B cell (primary cell): ENCODE measurements at regions of chr3 and their contacts with region 1.

Region 1: DNA sequence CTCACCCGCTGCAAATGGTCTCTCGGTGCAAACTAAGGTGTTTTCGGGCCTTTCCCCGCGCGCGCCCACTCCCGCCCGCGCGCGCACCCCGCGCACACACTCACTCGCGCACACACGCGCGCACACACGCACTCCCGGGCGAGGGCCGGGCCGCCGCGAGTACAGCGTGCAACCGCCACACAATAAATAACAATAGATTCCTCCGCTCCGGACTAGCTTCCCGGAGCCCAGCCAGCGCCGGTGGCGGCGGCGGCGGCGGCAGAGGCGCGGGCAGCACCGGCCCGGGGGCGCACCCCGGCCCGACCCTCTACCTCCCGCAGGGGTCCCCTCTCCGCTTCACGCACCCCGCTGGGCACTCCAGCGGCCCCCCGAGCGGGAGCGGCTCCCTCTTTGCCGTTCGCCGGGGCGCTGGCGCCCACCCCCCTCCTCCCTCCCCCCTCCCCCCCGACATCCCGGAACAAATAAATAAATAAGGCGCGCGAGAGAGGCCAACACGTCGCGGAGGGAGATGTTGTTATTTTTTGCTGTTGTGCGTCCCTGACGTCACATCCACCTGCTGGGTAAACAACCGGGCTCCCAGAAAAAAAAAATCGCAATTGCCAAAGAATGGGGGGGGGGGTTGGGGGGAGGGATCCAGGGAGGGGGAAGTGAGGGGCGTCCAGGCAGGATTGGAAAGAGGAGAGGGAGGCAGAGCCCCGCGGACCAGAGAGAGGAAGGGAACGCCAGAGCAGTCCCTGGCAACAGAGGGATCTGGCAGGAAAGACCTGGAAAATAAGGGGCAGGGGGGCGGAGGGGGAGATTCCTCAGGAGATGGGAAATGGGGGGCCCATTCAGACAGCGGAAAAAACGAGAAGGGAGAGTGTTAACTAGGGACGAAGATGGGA is at the start of gene FOXP1:
- DNase-seq: peak; percentile 90
- ATAC-seq: peak; percentile 26
- H3K4me3 ChIP-seq: peak within 1 kb of the TSS; percentile 80 to 97 (median 92)
- H3K4me3 Mint-ChIP-seq: peak within 1 kb of the TSS; percentile 96
- H3K27ac ChIP-seq: peak within 1 kb of the TSS; percentile 90 to 97
- H3K27ac Mint-ChIP-seq: peak within 1 kb of the TSS; percentile 97
- H3K4me1 ChIP-seq: peaks cover 19 to 42% of the 10 kb centered on the region in 2 donors
- H3K4me1 Mint-ChIP-seq: peaks cover 44% of the 10 kb centered on the region
- H3K27me3 ChIP-seq: peaks cover 0 to 9% (median 4%) of the 10 kb centered on the region in 4 experiments
- H3K27me3 Mint-ChIP-seq: peaks cover 3% of the 10 kb centered on the region
- CTCF ChIP-seq: no peak
- total RNA-seq, gene FOXP1: 508 and 530 TPM in 2 replicates

Region 2: DNA sequence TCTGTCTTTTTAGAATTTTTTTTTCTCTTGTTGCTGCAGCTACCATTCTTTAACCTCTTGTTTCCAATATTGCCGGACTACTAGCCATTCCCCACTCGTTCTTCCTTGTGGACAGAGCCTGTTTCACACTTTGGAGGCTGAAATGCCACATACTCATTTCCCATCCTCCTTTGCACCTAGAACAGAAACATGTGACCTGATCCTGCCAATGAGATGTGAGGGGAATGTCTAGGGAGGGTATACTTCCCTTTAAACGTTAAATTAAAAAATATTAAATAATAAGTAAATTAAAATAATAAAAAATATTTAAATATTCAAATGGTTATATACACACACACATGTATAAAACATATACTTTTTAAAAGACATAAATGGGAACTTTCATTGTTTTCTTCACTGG is 1250.7 kb before region 1 on chr3:
- CTCF ChIA-PET with region 1: no interaction called
- POLR2A ChIA-PET with region 1: no interaction called
- intact Hi-C with region 1: no loop called
- DNase-seq: no peak
- ATAC-seq: no peak
- H3K4me3 ChIP-seq: no peak overlapping the region
- H3K4me3 Mint-ChIP-seq: no peak overlapping the region
- H3K27ac ChIP-seq: no peak overlapping the region
- H3K27ac Mint-ChIP-seq: no peak overlapping the region
- H3K4me1 ChIP-seq: no peaks in the 10 kb centered on the region
- H3K4me1 Mint-ChIP-seq: no peaks in the 10 kb centered on the region
- H3K27me3 ChIP-seq: peaks cover 0 to 6% (median 0%) of the 10 kb centered on the region in 4 experiments
- H3K27me3 Mint-ChIP-seq: peaks cover 6% of the 10 kb centered on the region
- CTCF ChIP-seq: no peak

Region 3: DNA sequence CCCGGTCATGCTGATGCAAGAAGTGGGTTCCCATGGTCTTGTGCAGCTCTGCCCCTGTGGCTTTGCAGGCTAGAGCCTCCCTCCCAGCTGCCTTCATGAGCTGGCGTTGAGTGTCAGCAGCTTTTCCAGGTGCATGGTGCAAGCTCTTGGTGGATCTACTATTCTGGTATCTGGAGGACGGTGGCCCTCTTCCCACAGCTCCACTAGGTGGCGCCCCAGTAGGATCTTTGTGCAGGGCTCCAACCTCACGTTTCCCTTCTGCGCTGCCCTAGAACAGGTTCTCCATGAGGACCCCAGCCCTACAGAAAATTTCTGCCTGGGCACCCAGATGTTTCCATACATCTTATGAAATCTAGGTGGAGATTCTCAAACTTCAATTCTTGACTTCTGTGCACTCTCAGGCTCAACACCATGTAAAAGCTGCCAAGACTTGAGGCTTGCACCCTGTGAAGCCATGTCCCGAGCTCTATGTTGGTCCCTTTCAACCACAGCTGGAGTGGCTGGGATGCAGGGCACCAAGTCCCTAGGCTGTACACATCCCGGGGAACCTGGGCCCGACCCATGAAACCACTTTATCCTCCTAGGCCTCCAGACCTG is 1033.0 kb before region 1 on chr3:
- CTCF ChIA-PET with region 1: interaction called, 24 read pairs
- POLR2A ChIA-PET with region 1: no interaction called
- intact Hi-C with region 1: no loop called
- DNase-seq: peak; percentile 72
- ATAC-seq: peak; percentile 45
- H3K4me3 ChIP-seq: no peak overlapping the region
- H3K4me3 Mint-ChIP-seq: no peak overlapping the region
- H3K27ac ChIP-seq: no peak overlapping the region
- H3K27ac Mint-ChIP-seq: no peak overlapping the region
- H3K4me1 ChIP-seq: no peaks in the 10 kb centered on the region
- H3K4me1 Mint-ChIP-seq: no peaks in the 10 kb centered on the region
- H3K27me3 ChIP-seq: no peaks in the 10 kb centered on the region
- H3K27me3 Mint-ChIP-seq: no peaks in the 10 kb centered on the region
- CTCF ChIP-seq: peak; percentile 76

Region 4: GRCh38 chr3:71064288-71064955 is 519.4 kb before region 1 on chr3:
- CTCF ChIA-PET with region 1: interaction called, 7 read pairs
- POLR2A ChIA-PET with region 1: interaction called, 19 read pairs
- intact Hi-C with region 1: loop called (anchors 2 kb)
- DNase-seq: peak; percentile 88
- ATAC-seq: peak; percentile 45
- H3K4me3 ChIP-seq: peak overlapping the region; percentile 62 to 94 (median 76)
- H3K4me3 Mint-ChIP-seq: no peak overlapping the region
- H3K27ac ChIP-seq: peak overlapping the region; percentile 83 to 91
- H3K27ac Mint-ChIP-seq: no peak overlapping the region
- H3K4me1 ChIP-seq: peaks cover 56 to 76% of the 10 kb centered on the region in 2 donors
- H3K4me1 Mint-ChIP-seq: peaks cover 65% of the 10 kb centered on the region
- H3K27me3 ChIP-seq: no peaks in the 10 kb centered on the region
- H3K27me3 Mint-ChIP-seq: no peaks in the 10 kb centered on the region
- CTCF ChIP-seq: no peak

Region 5: DNA sequence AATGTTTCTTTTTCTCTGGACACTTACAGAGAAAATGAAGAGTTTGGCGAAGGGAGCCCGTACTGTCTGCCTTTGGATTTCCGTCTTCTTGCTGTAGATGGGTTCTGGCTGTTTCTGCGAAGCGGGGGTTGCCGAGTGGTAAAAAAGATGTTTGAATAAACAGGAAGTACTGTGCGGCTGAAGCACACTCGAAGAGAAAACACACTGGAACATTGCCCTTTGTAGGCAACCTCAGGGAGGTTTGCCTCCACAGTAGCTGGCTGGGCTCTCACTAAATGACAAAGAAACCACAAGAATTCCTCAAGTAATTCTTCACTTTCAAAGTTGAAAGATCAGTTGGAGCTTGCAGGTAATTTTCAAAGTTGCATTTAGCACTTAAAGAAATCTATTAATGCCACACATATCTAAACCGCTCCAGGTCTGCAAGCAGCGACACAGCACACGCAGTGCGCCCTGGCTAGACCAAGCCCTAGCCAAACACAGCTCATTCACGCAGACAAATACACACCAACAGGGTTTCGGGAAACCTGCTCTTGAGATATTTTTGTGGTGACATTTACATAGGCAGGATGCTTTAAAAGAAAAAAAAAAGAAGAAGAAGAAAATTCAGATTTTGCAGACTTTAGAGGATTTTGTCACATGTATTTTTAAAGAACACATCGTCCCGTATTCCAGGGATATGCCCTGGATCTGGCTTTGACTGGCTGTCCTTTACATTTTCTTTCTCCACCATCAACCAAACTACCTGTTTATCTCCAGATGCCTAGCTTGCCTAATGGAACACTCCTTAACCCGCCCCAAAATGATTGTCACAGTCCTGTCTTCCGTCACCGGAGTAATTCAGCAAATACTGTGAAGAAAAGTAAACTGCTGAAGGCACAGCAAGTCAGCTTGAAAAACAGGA is 453.1 kb before region 1 on chr3:
- CTCF ChIA-PET with region 1: interaction called, 3 read pairs
- POLR2A ChIA-PET with region 1: interaction called, 4 read pairs
- intact Hi-C with region 1: loop called (anchors 1 kb)
- DNase-seq: peak; percentile 81
- ATAC-seq: peak; percentile 76
- H3K4me3 ChIP-seq: peak overlapping the region; percentile 53 to 91 (median 71)
- H3K4me3 Mint-ChIP-seq: peak overlapping the region; percentile 93
- H3K27ac ChIP-seq: peak overlapping the region; percentile 72 to 91
- H3K27ac Mint-ChIP-seq: peak overlapping the region; percentile 94
- H3K4me1 ChIP-seq: peaks cover 51 to 64% of the 10 kb centered on the region in 2 donors
- H3K4me1 Mint-ChIP-seq: peaks cover 68% of the 10 kb centered on the region
- H3K27me3 ChIP-seq: no peaks in the 10 kb centered on the region
- H3K27me3 Mint-ChIP-seq: no peaks in the 10 kb centered on the region
- CTCF ChIP-seq: no peak

Region 6: DNA sequence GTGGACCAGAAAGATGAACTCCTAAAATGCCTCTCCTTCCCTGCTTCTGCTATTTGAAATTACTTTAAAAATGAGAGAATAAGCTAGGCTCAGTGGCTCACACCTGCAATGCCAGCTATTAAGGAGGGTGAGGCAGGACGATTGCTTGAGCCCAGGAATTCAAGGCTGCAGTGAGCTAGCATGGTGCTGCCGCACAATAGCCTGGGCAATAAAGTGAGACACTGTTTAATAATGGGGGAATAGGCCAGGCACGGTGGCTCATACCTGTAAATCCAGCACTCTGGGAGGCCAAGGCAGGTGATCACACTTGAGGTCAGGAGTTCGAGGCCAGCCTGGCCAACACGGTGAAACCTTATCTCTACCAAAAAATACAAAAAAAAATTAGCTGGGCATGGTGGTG is 271.3 kb before region 1 on chr3:
- CTCF ChIA-PET with region 1: interaction called, 6 read pairs
- POLR2A ChIA-PET with region 1: interaction called, 11 read pairs
- intact Hi-C with region 1: no loop called
- DNase-seq: no peak
- ATAC-seq: no peak
- H3K4me3 ChIP-seq: no peak overlapping the region
- H3K4me3 Mint-ChIP-seq: no peak overlapping the region
- H3K27ac ChIP-seq: peak overlapping the region in 1 of 2 donors; percentile 57
- H3K27ac Mint-ChIP-seq: peak overlapping the region; percentile 20
- H3K4me1 ChIP-seq: peaks cover 41 to 44% of the 10 kb centered on the region in 2 donors
- H3K4me1 Mint-ChIP-seq: peaks cover 48% of the 10 kb centered on the region
- H3K27me3 ChIP-seq: no peaks in the 10 kb centered on the region
- H3K27me3 Mint-ChIP-seq: no peaks in the 10 kb centered on the region
- CTCF ChIP-seq: no peak

Region 7: GRCh38 chr3:71563827-71564226 is 20.0 kb before region 1 on chr3:
- CTCF ChIA-PET with region 1: interaction called, 4 read pairs
- POLR2A ChIA-PET with region 1: interaction called, 10 read pairs
- intact Hi-C with region 1: loop called (anchors 2 kb)
- DNase-seq: peak; percentile 86
- ATAC-seq: peak; percentile 68
- H3K4me3 ChIP-seq: peak overlapping the region in 1 of 5 experiments; percentile 42
- H3K4me3 Mint-ChIP-seq: peak overlapping the region; percentile 72
- H3K27ac ChIP-seq: peak overlapping the region; percentile 51 to 53
- H3K27ac Mint-ChIP-seq: peak overlapping the region; percentile 60
- H3K4me1 ChIP-seq: peaks cover 42 to 56% of the 10 kb centered on the region in 2 donors
- H3K4me1 Mint-ChIP-seq: peaks cover 69% of the 10 kb centered on the region
- H3K27me3 ChIP-seq: peaks cover 0 to 4% (median 0%) of the 10 kb centered on the region in 4 experiments
- H3K27me3 Mint-ChIP-seq: peaks cover 8% of the 10 kb centered on the region
- CTCF ChIP-seq: no peak